GM13976 (cell line): ENCODE measurements at regions of chrX and their contacts with region 1.

Region 1: DNA sequence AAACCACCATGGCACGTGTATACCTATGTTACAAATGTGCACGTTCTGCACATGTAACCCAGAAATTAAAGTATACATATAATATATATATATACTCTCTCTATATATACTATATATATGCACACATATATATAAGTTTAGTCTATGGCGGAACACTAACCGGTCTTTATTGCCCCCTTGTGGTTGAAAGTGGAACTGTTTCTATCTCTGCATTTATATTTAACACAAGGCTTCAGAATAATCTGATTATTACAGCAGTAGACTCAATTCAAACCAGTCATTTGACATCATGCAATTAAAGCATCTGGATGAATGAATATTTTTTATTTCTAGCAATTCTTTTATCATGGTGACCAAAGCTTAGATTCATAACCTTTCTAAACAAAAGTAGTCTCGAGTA is 14.6 kb downstream of the RAB9B start:
- DNase-seq: peak; percentile 17
- CTCF ChIP-seq: peak; percentile 45

Region 2: GRCh38 chrX:103520386-103520785 is 297.1 kb before region 1 on chrX:
- in situ Hi-C with region 1: loop called (anchors 10 kb)
- DNase-seq: no peak
- CTCF ChIP-seq: no peak